ENCODE measurements at regions of chr1 and their contacts with region 1.

Region 1: GRCh38 chr1:209761011-209761635 is 5.3 kb downstream of the TRAF3IP3 start:
- DNase-seq: no peak
- H3K4me3 ChIP-seq: no peak overlapping the region
- H3K27me3 ChIP-seq: peaks cover 2% of the 10 kb centered on the region
- CTCF ChIP-seq: no peak

Region 2: DNA sequence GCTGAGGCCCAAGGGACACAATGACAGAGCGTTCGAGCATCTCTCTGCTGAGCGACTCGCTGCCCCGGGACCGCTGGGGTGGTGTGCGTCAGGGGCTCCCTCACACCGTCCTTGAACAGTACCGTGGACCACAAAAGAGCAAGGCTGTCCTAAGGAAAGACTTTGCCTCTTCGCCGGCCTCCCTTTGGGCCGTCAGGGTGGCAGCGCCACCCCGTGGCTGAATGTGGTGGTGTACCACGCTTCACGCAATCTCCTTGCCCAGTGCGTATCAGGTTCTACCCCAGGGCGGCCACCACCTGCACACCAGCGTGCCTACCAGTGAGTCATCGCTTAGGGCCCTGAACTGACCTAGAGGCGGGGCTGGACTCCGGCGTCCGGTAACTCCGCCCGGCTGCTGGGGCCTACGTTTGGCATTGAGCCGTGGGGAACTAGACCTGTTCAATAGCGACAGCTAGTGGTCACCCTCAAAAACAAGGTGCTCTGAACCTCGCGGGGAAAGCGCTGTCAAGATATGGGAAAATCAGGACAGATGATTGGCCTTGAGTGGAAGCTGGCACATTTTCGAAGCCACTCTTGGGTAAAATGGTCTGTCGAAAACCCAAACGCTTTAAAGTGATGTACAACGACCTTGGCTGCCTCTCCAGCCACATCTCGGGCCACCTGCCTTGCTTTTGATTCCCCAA is 13.4 kb before region 1 on chr1:
- CTCF ChIA-PET with region 1: interaction called, 14 read pairs
- POLR2A ChIA-PET with region 1: no interaction called
- DNase-seq: peak; percentile 22
- H3K4me3 ChIP-seq: peak overlapping the region; percentile 11; the same call in 1 of the 2 replicates
- H3K27me3 ChIP-seq: peaks cover 2% of the 10 kb centered on the region
- CTCF ChIP-seq: peak; percentile 78

Region 3: GRCh38 chr1:209860293-209860881 is 99.3 kb after region 1 on chr1:
- CTCF ChIA-PET with region 1: no interaction called
- POLR2A ChIA-PET with region 1: no interaction called
- DNase-seq: no peak
- H3K4me3 ChIP-seq: no peak overlapping the region
- H3K27me3 ChIP-seq: peaks cover 3% of the 10 kb centered on the region
- CTCF ChIP-seq: peak; percentile 89